Breast epithelium (tissue), 4 donors: ENCODE measurements at regions of chr3 and their contacts with region 1.

Region 1: GRCh38 chr3:14906351-14906971 is 40.9 kb upstream of the NR2C2 start:
- DNase-seq: no peak
- H3K4me3 ChIP-seq: no peak overlapping the region
- H3K27ac ChIP-seq: no peak overlapping the region
- H3K4me1 ChIP-seq: no peaks in the 10 kb centered on the region
- H3K27me3 ChIP-seq: no peaks in the 10 kb centered on the region
- CTCF ChIP-seq: no peak
- POLR2A ChIP-seq: no peak

Region 2: GRCh38 chr3:14876921-14877360 is 29.5 kb before region 1 on chr3:
- intact Hi-C with region 1: no loop called
- DNase-seq: peak; percentile 29 to 56
- H3K4me3 ChIP-seq: no peak overlapping the region
- H3K27ac ChIP-seq: peak overlapping the region in 1 of 2 donors; percentile 74
- H3K4me1 ChIP-seq: no peaks in the 10 kb centered on the region
- H3K27me3 ChIP-seq: no peaks in the 10 kb centered on the region
- CTCF ChIP-seq: no peak
- POLR2A ChIP-seq: no peak

Region 3: DNA sequence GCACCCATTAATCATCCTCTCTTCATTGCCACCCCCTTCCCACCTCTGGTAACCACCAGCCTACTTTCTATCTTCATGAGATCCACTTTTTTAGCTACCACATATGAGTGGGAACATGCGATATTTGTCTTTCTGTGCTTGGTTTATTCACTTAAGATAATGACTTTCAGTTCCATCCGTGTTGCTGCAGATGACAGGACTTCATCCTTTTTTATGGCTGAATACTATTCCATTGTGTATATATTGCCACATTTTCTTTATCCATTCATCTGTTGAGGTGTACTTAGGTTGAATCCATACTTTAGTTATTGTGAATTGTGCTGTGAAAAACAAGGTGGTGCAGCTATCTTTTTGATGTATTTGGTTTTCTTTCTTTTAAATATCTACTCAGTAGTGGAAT is 12.4 kb before region 1 on chr3:
- intact Hi-C with region 1: loop called (anchors 1 kb)
- DNase-seq: no peak
- H3K4me3 ChIP-seq: no peak overlapping the region
- H3K27ac ChIP-seq: no peak overlapping the region
- H3K4me1 ChIP-seq: no peaks in the 10 kb centered on the region
- H3K27me3 ChIP-seq: no peaks in the 10 kb centered on the region
- CTCF ChIP-seq: no peak
- POLR2A ChIP-seq: no peak